T-cell (primary cell): ENCODE measurements at regions of chr7 and their contacts with region 1.

Region 1: GRCh38 chr7:44847508-44847920 is 373 bp downstream of the H2AZ2 start:
- DNase-seq: peak; percentile 73 to 90 (median 82)
- ATAC-seq: peak; percentile 58 to 76 (median 74)
- H3K4me3 ChIP-seq: peak overlapping the region; percentile 57 to 79
- H3K4me3 Mint-ChIP-seq: peak overlapping the region; percentile 94 to 97 (median 96)
- H3K27ac ChIP-seq: peak overlapping the region; percentile 97
- H3K27ac Mint-ChIP-seq: peak overlapping the region; percentile 99
- H3K4me1 ChIP-seq: peaks cover 14% of the 10 kb centered on the region in 2 experiments
- H3K4me1 Mint-ChIP-seq: peaks cover 31 to 37% (median 37%) of the 10 kb centered on the region in 3 donors
- H3K27me3 ChIP-seq: no peaks in the 10 kb centered on the region
- H3K27me3 Mint-ChIP-seq: no peaks in the 10 kb centered on the region

Region 2: DNA sequence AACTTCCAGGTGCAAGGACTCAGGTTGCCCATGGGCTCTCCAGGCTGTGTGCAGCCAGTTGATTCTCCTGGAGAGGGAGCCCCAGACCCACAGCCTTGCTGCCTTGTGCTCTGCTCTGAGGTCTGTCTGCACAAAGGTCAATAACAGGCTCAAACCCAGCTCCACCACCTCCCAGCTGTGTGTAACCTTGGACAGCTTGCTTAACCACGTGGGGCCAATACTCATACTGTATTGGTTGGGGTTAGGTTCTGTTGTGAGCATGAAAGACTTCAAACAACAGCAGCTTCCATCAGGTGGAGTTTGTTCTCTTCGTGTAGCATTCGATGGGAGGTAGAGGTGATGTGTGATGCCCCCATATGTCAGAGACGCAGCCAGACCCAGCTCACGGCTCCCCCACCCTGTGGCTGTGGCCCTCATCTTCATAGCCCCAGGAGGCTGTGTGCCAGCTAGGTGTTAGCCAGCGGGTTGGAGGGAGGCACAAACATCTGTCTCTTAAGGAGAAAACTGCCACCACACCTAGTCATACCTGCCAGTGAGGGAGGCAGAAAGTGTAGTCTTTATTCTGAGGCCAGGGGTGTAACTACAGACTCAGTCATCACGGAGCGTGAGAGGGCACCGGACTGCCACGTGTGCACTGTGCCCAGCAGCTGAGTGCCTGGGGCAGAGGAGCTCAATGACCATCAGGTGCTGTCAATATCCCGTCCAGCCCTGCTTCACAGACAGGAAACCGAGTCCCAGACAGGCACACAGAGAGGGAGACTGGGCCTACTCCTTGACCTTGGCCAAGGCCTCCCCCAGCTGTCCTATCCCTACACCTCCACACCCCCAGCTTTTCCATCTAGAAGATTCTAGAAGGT is 716.1 kb before region 1 on chr7:
- CTCF ChIA-PET with region 1: no interaction called
- POLR2A ChIA-PET with region 1: no interaction called
- DNase-seq: no peak
- ATAC-seq: no peak
- H3K4me3 ChIP-seq: no peak overlapping the region
- H3K4me3 Mint-ChIP-seq: no peak overlapping the region
- H3K27ac ChIP-seq: no peak overlapping the region
- H3K27ac Mint-ChIP-seq: no peak overlapping the region
- H3K4me1 ChIP-seq: no peaks in the 10 kb centered on the region
- H3K4me1 Mint-ChIP-seq: peaks cover 0 to 4% (median 0%) of the 10 kb centered on the region in 3 donors
- H3K27me3 ChIP-seq: peaks cover 0 to 11% of the 10 kb centered on the region in 2 experiments
- H3K27me3 Mint-ChIP-seq: no peaks in the 10 kb centered on the region

Region 3: GRCh38 chr7:44797329-44798251 is 49.9 kb before region 1 on chr7:
- CTCF ChIA-PET with region 1: interaction called, 8 to 10 read pairs
- POLR2A ChIA-PET with region 1: interaction called, 5 to 15 read pairs
- DNase-seq: peak; percentile 63 to 88 (median 78)
- ATAC-seq: peak; percentile 47 to 59 (median 56)
- H3K4me3 ChIP-seq: peak overlapping the region; percentile 76 to 99
- H3K4me3 Mint-ChIP-seq: peak overlapping the region; percentile 87 to 95 (median 89)
- H3K27ac ChIP-seq: peak overlapping the region; percentile 99
- H3K27ac Mint-ChIP-seq: peak overlapping the region; percentile 93 to 95
- H3K4me1 ChIP-seq: peaks cover 17 to 25% of the 10 kb centered on the region in 2 experiments
- H3K4me1 Mint-ChIP-seq: peaks cover 26 to 42% (median 42%) of the 10 kb centered on the region in 3 donors
- H3K27me3 ChIP-seq: no peaks in the 10 kb centered on the region
- H3K27me3 Mint-ChIP-seq: no peaks in the 10 kb centered on the region

Region 4: GRCh38 chr7:44824894-44825526 is 22.5 kb before region 1 on chr7:
- CTCF ChIA-PET with region 1: no interaction called
- POLR2A ChIA-PET with region 1: interaction called, 8 to 10 read pairs
- DNase-seq: no peak
- ATAC-seq: peak in 1 of 4 experiments; percentile 17
- H3K4me3 ChIP-seq: no peak overlapping the region
- H3K4me3 Mint-ChIP-seq: no peak overlapping the region
- H3K27ac ChIP-seq: peak overlapping the region; percentile 20
- H3K27ac Mint-ChIP-seq: peak overlapping the region; percentile 47 to 53
- H3K4me1 ChIP-seq: no peaks in the 10 kb centered on the region
- H3K4me1 Mint-ChIP-seq: peaks cover 8 to 9% (median 8%) of the 10 kb centered on the region in 3 donors
- H3K27me3 ChIP-seq: no peaks in the 10 kb centered on the region
- H3K27me3 Mint-ChIP-seq: no peaks in the 10 kb centered on the region

Region 5: DNA sequence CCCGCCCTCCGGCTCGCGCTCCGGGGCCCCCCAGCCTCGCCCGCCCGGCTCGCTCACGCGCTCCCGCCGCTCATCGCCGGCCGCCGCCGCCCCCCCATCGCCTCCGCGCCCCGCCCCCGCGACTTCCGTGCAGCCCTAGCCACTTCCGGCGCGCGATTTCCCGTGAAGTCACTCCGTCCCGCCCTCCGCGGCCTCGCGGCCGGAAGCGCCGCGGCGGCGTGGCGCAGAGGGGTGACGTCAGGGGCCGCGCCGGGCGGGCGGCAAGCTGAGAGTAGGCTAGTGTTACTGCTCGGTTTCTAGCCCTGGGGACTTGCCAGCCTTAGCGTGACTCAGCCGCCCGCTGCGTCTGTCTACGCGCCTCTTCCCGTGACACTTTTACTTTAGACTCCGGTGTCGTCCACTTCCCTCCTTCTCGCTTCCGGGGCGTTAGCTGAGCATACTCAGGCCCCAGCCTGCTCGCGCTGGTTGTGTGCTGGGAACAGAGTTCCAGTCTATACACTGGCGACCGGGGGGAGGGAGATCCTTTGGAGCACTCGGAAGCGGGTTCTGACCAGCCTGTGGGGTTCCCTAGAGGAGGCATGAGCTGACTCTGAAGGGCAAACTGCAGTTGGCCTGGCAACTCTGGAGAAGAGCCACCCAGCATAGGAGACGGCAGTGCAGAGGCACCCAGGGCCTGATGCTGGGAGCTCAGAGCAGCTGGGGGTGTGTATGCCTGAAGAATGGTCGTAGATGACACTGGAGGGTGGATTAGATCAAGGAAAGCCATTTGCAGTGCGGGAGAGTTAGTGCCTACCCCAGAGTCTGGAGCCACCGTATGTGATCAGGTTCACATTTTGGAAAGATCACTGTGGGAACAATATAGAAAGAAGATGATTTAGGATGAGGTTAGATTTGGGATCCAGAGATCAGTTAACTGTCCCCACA is 38.1 kb after region 1 on chr7 and contains the start of gene PURB:
- CTCF ChIA-PET with region 1: interaction called in 1 of 2 experiments, 15 read pairs
- POLR2A ChIA-PET with region 1: interaction called, 3 to 15 read pairs
- DNase-seq: peak; percentile 89 to 99 (median 95)
- ATAC-seq: peak; percentile 86 to 89 (median 88)
- H3K4me3 ChIP-seq: peak within 1 kb of the TSS; percentile 61 to 77
- H3K4me3 Mint-ChIP-seq: peak within 1 kb of the TSS; percentile 93 to 96 (median 95)
- H3K27ac ChIP-seq: peak within 1 kb of the TSS; percentile 100
- H3K27ac Mint-ChIP-seq: peak within 1 kb of the TSS; percentile 94 to 100
- H3K4me1 ChIP-seq: peaks cover 31 to 40% of the 10 kb centered on the region in 2 experiments
- H3K4me1 Mint-ChIP-seq: peaks cover 32 to 51% (median 40%) of the 10 kb centered on the region in 3 donors
- H3K27me3 ChIP-seq: no peaks in the 10 kb centered on the region
- H3K27me3 Mint-ChIP-seq: peaks cover 0 to 1% of the 10 kb centered on the region in 2 donors
- total RNA-seq, gene PURB: 19.5 to 29.8 (median 20.1) TPM

Region 6: GRCh38 chr7:44905002-44905635 is 57.6 kb after region 1 on chr7:
- CTCF ChIA-PET with region 1: no interaction called
- POLR2A ChIA-PET with region 1: no interaction called
- DNase-seq: no peak
- ATAC-seq: no peak
- H3K4me3 ChIP-seq: no peak overlapping the region
- H3K4me3 Mint-ChIP-seq: no peak overlapping the region
- H3K27ac ChIP-seq: no peak overlapping the region
- H3K27ac Mint-ChIP-seq: no peak overlapping the region
- H3K4me1 ChIP-seq: no peaks in the 10 kb centered on the region
- H3K4me1 Mint-ChIP-seq: no peaks in the 10 kb centered on the region
- H3K27me3 ChIP-seq: peaks cover 0 to 5% of the 10 kb centered on the region in 2 experiments
- H3K27me3 Mint-ChIP-seq: peaks cover 0 to 4% of the 10 kb centered on the region in 2 donors

Region 7: GRCh38 chr7:44921607-44922359 is 74.3 kb after region 1 on chr7:
- CTCF ChIA-PET with region 1: interaction called, 5 to 11 read pairs
- POLR2A ChIA-PET with region 1: interaction called, 3 read pairs
- DNase-seq: peak; percentile 68 to 98 (median 92)
- ATAC-seq: peak; percentile 96 to 98 (median 97)
- H3K4me3 ChIP-seq: no peak overlapping the region
- H3K4me3 Mint-ChIP-seq: no peak overlapping the region
- H3K27ac ChIP-seq: no peak overlapping the region
- H3K27ac Mint-ChIP-seq: no peak overlapping the region
- H3K4me1 ChIP-seq: peaks cover 0 to 10% of the 10 kb centered on the region in 2 experiments
- H3K4me1 Mint-ChIP-seq: peaks cover 5 to 8% (median 6%) of the 10 kb centered on the region in 3 donors
- H3K27me3 ChIP-seq: peaks cover 0 to 4% of the 10 kb centered on the region in 2 experiments
- H3K27me3 Mint-ChIP-seq: no peaks in the 10 kb centered on the region

Region 8: GRCh38 chr7:45066409-45066808 is 218.9 kb after region 1 on chr7:
- CTCF ChIA-PET with region 1: no interaction called
- POLR2A ChIA-PET with region 1: interaction called in 1 of 2 experiments, 10 read pairs
- DNase-seq: no peak
- ATAC-seq: no peak
- H3K4me3 ChIP-seq: no peak overlapping the region
- H3K4me3 Mint-ChIP-seq: no peak overlapping the region
- H3K27ac ChIP-seq: no peak overlapping the region
- H3K27ac Mint-ChIP-seq: no peak overlapping the region
- H3K4me1 ChIP-seq: peaks cover 0 to 42% of the 10 kb centered on the region in 2 experiments
- H3K4me1 Mint-ChIP-seq: peaks cover 27 to 49% (median 44%) of the 10 kb centered on the region in 3 donors
- H3K27me3 ChIP-seq: no peaks in the 10 kb centered on the region
- H3K27me3 Mint-ChIP-seq: no peaks in the 10 kb centered on the region